GM12878 (cell line): ENCODE measurements at regions of chr2 and their contacts with region 1.

Region 1: DNA sequence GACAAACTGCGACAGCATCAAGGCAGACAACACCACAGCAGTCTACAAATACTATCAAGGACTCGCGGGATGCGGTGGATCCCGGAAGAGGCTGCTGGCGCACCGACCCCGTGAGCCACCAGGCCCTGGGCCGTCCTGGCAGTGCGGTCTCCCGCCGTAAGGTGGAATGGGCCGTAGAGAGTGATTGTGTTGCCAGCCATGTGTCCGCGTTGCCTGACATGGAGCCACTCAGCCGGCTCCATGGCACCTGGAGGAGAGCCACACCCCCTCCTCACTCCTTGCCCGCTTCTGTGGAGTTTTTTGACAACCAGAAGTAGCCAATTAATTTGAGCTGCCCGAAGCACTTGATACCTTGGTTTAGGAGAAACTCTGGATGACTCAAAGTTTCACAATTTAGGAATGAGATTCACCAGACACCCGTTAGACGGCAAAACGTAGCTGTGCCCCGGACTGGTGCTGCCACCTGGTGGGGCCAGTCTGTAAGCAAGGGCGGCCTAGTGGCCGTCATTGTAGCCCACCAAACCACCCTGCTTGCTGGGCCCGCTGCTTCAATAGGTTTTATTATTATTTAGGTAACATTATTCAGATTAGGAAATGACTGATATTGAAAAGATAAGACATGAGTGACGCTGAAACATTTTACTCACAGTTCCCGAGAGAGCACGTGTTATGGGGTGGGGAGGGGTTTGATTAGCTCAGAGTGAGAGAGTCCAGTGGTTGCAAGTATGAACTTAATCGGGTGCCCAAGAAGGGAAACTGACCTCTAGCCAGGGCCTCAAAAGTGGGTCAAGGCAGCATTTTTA is 10.2 kb upstream of the IMP4 start:
- DNase-seq: no peak
- ATAC-seq: peak; percentile 84
- H3K4me3 ChIP-seq: no peak overlapping the region
- H3K27ac ChIP-seq: no peak overlapping the region
- H3K4me1 ChIP-seq: no peaks in the 10 kb centered on the region
- H3K27me3 ChIP-seq: no peaks in the 10 kb centered on the region
- CTCF ChIP-seq: peak; percentile 92 to 97 (median 93)
- EP300 ChIP-seq: no peak
- POLR2A ChIP-seq: no peak
- RAD21 ChIP-seq: peak; percentile 94

Region 2: DNA sequence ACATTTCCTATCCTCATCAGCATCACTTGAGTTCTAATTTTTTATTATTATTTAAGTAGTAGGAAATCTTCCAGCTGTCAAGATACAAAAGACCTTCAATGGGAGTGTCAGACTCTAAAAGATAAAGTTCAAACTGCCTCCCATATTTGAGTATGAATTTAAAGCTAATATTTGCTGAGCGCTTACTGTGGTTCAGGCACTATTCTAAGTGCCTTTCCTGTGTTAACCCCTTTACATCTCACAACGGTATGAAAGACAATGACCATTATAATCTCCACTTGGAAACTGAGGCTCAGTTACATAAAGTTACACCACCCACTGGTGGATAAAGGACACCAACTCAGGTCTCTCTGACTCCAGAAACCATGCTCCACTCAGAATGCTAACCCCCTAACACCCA is 313.1 kb before region 1 on chr2:
- CTCF ChIA-PET with region 1: no interaction called
- POLR2A ChIA-PET with region 1: no interaction called
- RAD21 ChIA-PET with region 1: no interaction called
- SMC1A ChIA-PET with region 1: no interaction called
- in situ Hi-C with region 1: no loop called
- intact Hi-C with region 1: loop called (anchors 10 kb)
- DNase-seq: no peak
- ATAC-seq: no peak
- H3K4me3 ChIP-seq: no peak overlapping the region
- H3K27ac ChIP-seq: no peak overlapping the region
- H3K4me1 ChIP-seq: no peaks in the 10 kb centered on the region
- H3K27me3 ChIP-seq: no peaks in the 10 kb centered on the region
- CTCF ChIP-seq: no peak
- EP300 ChIP-seq: no peak
- POLR2A ChIP-seq: no peak
- RAD21 ChIP-seq: no peak

Region 3: GRCh38 chr2:130156624-130157004 is 175.9 kb before region 1 on chr2:
- CTCF ChIA-PET with region 1: interaction called, 17 read pairs
- POLR2A ChIA-PET with region 1: no interaction called
- RAD21 ChIA-PET with region 1: interaction called, 12 read pairs
- SMC1A ChIA-PET with region 1: interaction called, 5 read pairs
- in situ Hi-C with region 1: loop called (anchors 5 kb)
- intact Hi-C with region 1: loop called (anchors 1 kb)
- DNase-seq: no peak
- ATAC-seq: no peak
- H3K4me3 ChIP-seq: no peak overlapping the region
- H3K27ac ChIP-seq: no peak overlapping the region
- H3K4me1 ChIP-seq: peaks cover 18% of the 10 kb centered on the region
- H3K27me3 ChIP-seq: no peaks in the 10 kb centered on the region
- CTCF ChIP-seq: no peak
- EP300 ChIP-seq: no peak
- POLR2A ChIP-seq: no peak
- RAD21 ChIP-seq: no peak

Region 4: DNA sequence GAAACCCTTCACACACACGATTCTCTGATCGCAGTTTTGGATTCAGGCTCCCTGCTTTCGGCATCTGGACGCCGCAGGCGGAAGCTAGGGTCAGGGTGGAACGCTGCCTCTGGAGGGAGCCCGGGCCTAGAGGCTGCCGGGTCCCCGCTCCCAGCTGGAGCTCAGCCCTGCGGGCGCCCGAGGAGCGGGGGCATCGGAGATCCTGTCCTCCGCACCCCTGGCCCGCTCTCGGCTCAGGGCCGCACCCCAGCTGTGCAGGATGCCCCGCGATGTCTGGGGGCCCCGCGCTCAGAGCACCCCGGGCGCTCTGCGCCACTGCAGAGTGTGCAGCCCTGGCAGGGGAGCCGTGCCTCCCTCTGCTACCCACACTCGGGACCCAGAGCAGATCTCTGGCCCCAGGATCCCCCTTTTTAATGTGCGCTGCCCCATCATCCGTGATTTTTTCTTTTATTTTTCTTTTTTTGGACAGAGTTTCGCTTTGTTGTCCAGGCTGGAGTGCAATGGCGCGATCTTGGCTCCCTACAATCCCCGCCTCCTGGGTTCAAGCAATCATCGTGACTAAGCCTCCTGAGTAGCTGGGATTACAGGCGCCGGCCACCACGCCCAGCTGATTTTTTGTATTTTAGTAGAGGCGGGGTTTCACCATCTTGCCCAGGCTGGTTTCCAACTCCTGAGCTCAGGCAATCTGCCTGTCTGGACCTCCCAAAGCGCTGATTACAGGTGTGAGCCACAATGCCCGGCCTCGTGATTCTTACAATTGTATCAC is 79.4 kb before region 1 on chr2:
- CTCF ChIA-PET with region 1: no interaction called
- POLR2A ChIA-PET with region 1: no interaction called
- RAD21 ChIA-PET with region 1: no interaction called
- SMC1A ChIA-PET with region 1: no interaction called
- in situ Hi-C with region 1: no loop called
- intact Hi-C with region 1: no loop called
- DNase-seq: no peak
- ATAC-seq: peak; percentile 21; the same call in 2 of the 3 replicates
- H3K4me3 ChIP-seq: no peak overlapping the region
- H3K27ac ChIP-seq: no peak overlapping the region
- H3K4me1 ChIP-seq: no peaks in the 10 kb centered on the region
- H3K27me3 ChIP-seq: peaks cover 6 to 10% of the 10 kb centered on the region in 2 experiments
- CTCF ChIP-seq: no peak
- EP300 ChIP-seq: no peak
- POLR2A ChIP-seq: no peak
- RAD21 ChIP-seq: no peak

Region 5: GRCh38 chr2:130342533-130343275 is 10.2 kb after region 1 on chr2 and contains the start of gene IMP4:
- CTCF ChIA-PET with region 1: interaction called, 38 read pairs
- POLR2A ChIA-PET with region 1: no interaction called
- RAD21 ChIA-PET with region 1: interaction called, 13 read pairs
- SMC1A ChIA-PET with region 1: interaction called, 24 read pairs
- in situ Hi-C with region 1: no loop called
- intact Hi-C with region 1: no loop called
- DNase-seq: peak; percentile 99
- ATAC-seq: peak; percentile 92
- H3K4me3 ChIP-seq: peak within 1 kb of the TSS; percentile 67
- H3K27ac ChIP-seq: peak within 1 kb of the TSS; percentile 81
- H3K4me1 ChIP-seq: peaks cover 21% of the 10 kb centered on the region
- H3K27me3 ChIP-seq: no peaks in the 10 kb centered on the region
- CTCF ChIP-seq: peak; percentile 27 to 45 (median 29); a peak in 4 of 6 replicates
- EP300 ChIP-seq: no peak
- POLR2A ChIP-seq: peak; percentile 85
- RAD21 ChIP-seq: no peak
- polyA plus RNA-seq, gene IMP4: 41.4 to 100 TPM

Region 6: DNA sequence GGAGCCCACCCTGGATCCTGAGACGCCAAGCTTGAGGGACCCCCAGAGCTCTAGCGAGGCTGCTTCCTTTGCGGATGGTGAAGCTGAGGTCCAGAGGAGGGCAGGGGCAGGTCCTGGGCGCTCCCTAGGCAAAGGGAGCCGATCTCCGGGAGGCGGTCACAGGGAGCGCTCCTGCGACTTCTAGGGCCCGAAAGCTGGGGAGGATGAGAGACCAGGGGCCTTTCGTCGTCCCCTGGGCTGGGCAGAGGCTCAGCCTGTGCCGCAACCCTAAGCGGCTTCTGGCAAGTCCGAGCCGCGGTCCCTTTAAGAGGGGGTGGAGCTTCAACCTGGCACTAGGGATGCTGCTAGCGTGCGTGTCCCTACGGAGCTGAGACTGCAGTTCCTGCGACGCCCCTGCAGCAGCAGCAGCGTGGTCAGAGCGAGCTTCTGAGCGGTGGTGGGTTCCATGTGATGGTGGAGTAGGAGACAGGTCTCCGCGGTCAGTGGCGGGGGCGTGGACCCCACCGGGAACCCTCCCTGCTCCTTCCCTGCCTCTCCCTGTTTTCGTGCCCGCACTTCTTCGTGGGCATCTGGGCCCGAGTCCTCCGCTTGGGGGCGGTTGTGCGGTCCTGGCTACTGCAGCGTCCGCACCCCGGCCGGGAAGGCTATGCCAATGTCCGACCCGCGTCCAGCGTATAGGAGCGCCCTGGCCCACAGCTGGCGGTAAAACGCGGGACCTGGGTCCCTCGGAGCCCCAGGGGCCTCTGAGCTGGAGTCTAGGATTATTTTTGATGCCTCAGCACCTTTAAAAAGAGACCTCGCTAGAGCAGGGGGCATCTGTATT is 1349.9 kb after region 1 on chr2:
- CTCF ChIA-PET with region 1: no interaction called
- POLR2A ChIA-PET with region 1: no interaction called
- RAD21 ChIA-PET with region 1: no interaction called
- SMC1A ChIA-PET with region 1: no interaction called
- in situ Hi-C with region 1: no loop called
- intact Hi-C with region 1: loop called (anchors 2 kb)
- DNase-seq: no peak
- ATAC-seq: peak; percentile 98
- H3K4me3 ChIP-seq: peak overlapping the region; percentile 88
- H3K27ac ChIP-seq: peak overlapping the region; percentile 62
- H3K4me1 ChIP-seq: no peaks in the 10 kb centered on the region; the same call in 1 of the 2 replicates
- H3K27me3 ChIP-seq: no peaks in the 10 kb centered on the region
- CTCF ChIP-seq: peak; percentile 23 to 30 (median 24); a peak in 4 of 6 replicates
- EP300 ChIP-seq: no peak
- POLR2A ChIP-seq: peak; percentile 96
- RAD21 ChIP-seq: no peak